Dorsolateral prefrontal cortex (tissue), 120 donors: ENCODE measurements at regions of chr10 and their contacts with region 1.

Region 1: GRCh38 chr10:132239126-132240031 is 52.6 kb downstream of the DPYSL4 start:
- DNase-seq: no peak
- H3K4me3 ChIP-seq: no peak overlapping the region
- H3K27ac ChIP-seq: no peak overlapping the region
- H3K27me3 ChIP-seq: no peaks in the 10 kb centered on the region
- CTCF ChIP-seq: no peak

Region 2: DNA sequence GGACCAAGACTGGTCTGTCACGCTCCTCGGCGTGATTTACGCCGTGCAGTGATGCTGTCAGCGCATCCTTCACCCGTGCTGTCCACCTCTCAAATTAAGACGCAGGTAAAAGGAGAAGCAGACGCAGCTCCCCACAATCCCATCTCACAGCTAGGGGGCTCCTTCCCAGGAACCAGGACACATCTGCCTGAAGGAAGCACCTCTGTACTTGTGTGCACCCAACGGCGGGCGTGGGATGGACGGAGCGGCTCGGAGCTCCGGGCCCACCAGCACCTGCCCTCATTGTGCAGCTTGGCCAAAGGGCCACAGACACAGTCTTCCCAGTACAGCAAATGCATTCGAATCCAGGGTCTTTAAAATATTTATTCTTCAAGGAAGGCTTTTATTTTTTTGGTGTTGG is 13.0 kb after region 1 on chr10:
- intact Hi-C with region 1: no loop called
- DNase-seq: no peak
- H3K4me3 ChIP-seq: no peak overlapping the region
- H3K27ac ChIP-seq: peak overlapping the region in 5 of 59 donors; percentile 15 to 64 (median 27)
- H3K27me3 ChIP-seq: no peaks in the 10 kb centered on the region
- CTCF ChIP-seq: peak in 6 of 56 donors; percentile 4 to 25 (median 13)

Region 3: DNA sequence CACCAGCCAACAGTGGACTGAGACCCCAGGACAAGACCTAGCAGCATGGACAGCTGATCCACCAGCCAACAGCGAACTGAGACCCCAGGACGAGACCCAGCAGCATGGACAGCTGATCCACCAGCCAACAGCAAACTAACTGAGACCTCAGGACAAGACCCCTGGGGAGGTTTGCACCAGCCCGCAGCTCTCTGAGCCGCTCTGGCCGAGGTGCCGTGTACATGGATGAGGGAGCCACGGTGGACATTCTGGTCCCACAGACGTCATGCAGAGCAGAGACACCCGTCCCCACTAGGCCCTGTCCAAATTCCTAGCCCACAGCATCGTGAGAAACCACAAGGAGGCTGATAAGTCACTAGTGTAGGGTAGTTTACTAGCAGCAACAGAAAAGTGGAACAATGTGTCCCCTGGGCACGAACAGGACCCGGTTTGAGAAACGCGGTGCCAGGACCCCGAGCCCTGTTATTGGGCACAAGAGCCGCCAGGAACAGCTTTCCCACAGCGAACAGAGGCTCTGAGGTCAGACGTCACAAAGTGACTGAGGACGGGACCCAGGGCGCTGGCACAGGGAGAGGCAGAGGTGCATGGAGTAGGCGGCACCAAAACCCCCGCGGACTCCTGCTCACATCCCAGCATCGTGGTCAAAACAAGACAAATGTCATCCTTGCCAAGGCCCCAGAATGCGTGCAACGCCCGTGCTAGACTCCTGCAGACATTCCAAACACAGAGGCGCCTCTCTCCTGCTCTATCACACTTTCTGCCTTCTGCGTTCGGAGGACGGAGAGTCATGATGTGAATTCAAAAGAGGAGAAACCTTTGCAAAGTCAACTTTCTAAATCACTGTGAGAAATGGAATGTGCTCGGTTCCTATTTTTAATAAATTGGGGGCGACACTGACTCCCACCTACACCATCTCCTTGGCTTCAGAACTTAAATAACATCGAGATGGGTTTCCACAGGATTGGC is 60.3 kb after region 1 on chr10:
- intact Hi-C with region 1: loop called in 1 of 2 experiments (anchors 5 kb)
- DNase-seq: peak in 3 of 10 donors; percentile 15 to 54 (median 41)
- H3K4me3 ChIP-seq: no peak overlapping the region
- H3K27ac ChIP-seq: peak overlapping the region in 37 of 59 donors; percentile 9 to 88 (median 59)
- H3K27me3 ChIP-seq: no peaks in the 10 kb centered on the region
- CTCF ChIP-seq: no peak

Region 4: GRCh38 chr10:132331526-132332432 is 92.4 kb after region 1 on chr10 and contains the start of gene LRRC27:
- intact Hi-C with region 1: no loop called
- DNase-seq: peak; percentile 90 to 97 (median 94)
- H3K4me3 ChIP-seq: peak within 1 kb of the TSS; percentile 63 to 99 (median 91)
- H3K27ac ChIP-seq: peak within 1 kb of the TSS in 58 of 59 donors; percentile 5 to 92 (median 84)
- H3K27me3 ChIP-seq: no peaks in the 10 kb centered on the region
- CTCF ChIP-seq: peak in 11 of 56 donors; percentile 6 to 29 (median 17)
- total RNA-seq, gene LRRC27: 14.0 to 36.4 (median 25.3) TPM

Region 5: DNA sequence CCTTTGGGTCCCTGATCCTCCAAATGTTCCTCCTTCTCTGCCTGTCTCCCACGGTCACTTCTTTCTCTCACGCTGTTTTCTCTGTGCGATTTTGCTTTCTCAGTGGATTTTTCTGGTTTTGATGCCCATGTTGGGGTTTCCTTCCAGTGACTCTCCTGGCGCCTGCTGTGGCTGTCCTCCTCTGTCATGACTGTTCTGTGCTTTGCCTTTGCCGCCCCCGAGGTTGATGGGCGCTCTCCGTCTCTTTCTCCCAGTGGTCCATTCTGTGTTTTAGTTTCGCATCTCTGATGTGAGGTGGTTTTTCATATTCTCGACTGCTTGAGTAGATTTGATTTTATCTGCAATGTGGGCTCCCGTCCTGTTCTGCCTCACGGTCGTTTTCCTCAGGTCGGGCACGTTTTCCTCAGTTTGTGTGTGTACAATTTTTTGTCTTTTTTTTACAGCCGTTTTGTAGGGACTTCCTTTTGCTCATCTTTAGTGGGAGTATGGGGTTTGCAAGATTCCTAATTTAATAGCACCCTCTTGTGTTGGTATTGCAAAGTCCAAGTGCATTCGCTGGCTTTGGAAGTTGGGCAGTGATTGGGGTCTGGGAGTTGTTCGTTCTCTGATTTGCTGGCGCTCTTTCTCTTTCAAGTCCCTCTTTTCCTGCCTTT is 398.2 kb after region 1 on chr10:
- intact Hi-C with region 1: no loop called
- DNase-seq: peak in 6 of 10 donors; percentile 27 to 54 (median 38)
- H3K4me3 ChIP-seq: peak overlapping the region in 58 of 59 donors; percentile 3 to 67 (median 44)
- H3K27ac ChIP-seq: peak overlapping the region in 58 of 59 donors; percentile 0 to 90 (median 78)
- H3K27me3 ChIP-seq: no peaks in the 10 kb centered on the region
- CTCF ChIP-seq: peak; percentile 64 to 94 (median 84)